WTC11 (cell line): ENCODE measurements at regions of chr4 and their contacts with region 1.

Region 1: GRCh38 chr4:169530048-169530447 is 82.3 kb downstream of the NEK1 start:
- DNase-seq: no peak
- ATAC-seq: no peak
- H3K4me3 Mint-ChIP-seq: no peak overlapping the region
- H3K27ac Mint-ChIP-seq: no peak overlapping the region
- H3K4me1 Mint-ChIP-seq: no peaks in the 10 kb centered on the region
- H3K27me3 Mint-ChIP-seq: no peaks in the 10 kb centered on the region
- CTCF ChIP-seq: no peak

Region 2: GRCh38 chr4:168758351-168758876 is 771.6 kb before region 1 on chr4:
- CTCF ChIA-PET with region 1: no interaction called
- POLR2A ChIA-PET with region 1: no interaction called
- DNase-seq: no peak
- ATAC-seq: no peak
- H3K4me3 Mint-ChIP-seq: no peak overlapping the region
- H3K27ac Mint-ChIP-seq: no peak overlapping the region
- H3K4me1 Mint-ChIP-seq: no peaks in the 10 kb centered on the region
- H3K27me3 Mint-ChIP-seq: no peaks in the 10 kb centered on the region
- CTCF ChIP-seq: no peak

Region 3: GRCh38 chr4:169492438-169493163 is 37.4 kb before region 1 on chr4:
- CTCF ChIA-PET with region 1: no interaction called
- POLR2A ChIA-PET with region 1: interaction called, 13 read pairs
- DNase-seq: peak; percentile 27
- ATAC-seq: peak; percentile 81
- H3K4me3 Mint-ChIP-seq: no peak overlapping the region
- H3K27ac Mint-ChIP-seq: no peak overlapping the region
- H3K4me1 Mint-ChIP-seq: no peaks in the 10 kb centered on the region
- H3K27me3 Mint-ChIP-seq: no peaks in the 10 kb centered on the region
- CTCF ChIP-seq: peak; percentile 74

Region 4: GRCh38 chr4:169510617-169511016 is 19.4 kb before region 1 on chr4:
- CTCF ChIA-PET with region 1: no interaction called
- POLR2A ChIA-PET with region 1: no interaction called
- DNase-seq: no peak
- ATAC-seq: no peak
- H3K4me3 Mint-ChIP-seq: no peak overlapping the region
- H3K27ac Mint-ChIP-seq: no peak overlapping the region
- H3K4me1 Mint-ChIP-seq: no peaks in the 10 kb centered on the region
- H3K27me3 Mint-ChIP-seq: no peaks in the 10 kb centered on the region
- CTCF ChIP-seq: no peak

Region 5: DNA sequence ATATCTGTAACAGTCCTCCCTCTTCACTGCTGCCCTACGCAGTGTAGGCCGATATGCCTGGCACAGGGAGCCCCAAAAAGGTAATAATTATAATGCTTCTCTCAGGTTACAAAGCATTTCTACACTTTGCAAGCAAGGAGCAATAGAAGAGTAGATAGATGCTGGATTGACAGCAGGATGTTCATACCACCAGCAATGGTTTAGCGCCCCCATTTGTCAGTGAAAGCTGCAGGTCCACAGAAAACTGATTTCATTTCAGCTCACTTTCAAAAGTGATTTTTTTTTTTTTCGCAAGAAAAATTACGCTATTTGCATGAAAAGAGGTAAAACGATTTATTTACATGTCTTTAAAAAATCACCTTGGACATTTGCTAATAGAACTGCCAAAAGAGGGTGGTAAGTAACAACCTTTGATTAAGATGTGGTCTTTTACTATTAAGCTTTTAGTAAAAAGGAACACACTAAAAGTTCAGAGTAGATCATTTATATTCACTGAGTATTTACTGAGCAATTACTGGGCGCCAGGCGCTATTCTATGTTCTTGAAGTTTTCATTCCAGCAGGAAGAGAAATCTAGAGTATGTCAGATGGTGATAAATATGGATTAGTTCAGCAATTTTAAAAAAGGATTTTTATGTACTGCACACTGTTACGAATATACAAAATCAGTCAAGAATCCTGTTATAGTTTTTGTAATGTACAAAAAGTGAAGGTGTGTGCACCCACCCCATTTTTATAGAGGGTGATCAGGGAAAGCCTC is 193.3 kb after region 1 on chr4:
- CTCF ChIA-PET with region 1: no interaction called
- POLR2A ChIA-PET with region 1: no interaction called
- DNase-seq: no peak
- ATAC-seq: peak; percentile 41; the same call in 1 of the 2 replicates
- H3K4me3 Mint-ChIP-seq: no peak overlapping the region
- H3K27ac Mint-ChIP-seq: no peak overlapping the region
- H3K4me1 Mint-ChIP-seq: no peaks in the 10 kb centered on the region
- H3K27me3 Mint-ChIP-seq: no peaks in the 10 kb centered on the region
- CTCF ChIP-seq: no peak